ENCODE measurements at regions of chr3 and their contacts with region 1.

Region 1: GRCh38 chr3:44510000-44510368 is 32.5 kb upstream of the ZNF445 start:
- DNase-seq: no peak
- H3K4me3 Mint-ChIP-seq: peak overlapping the region; percentile 89
- H3K27ac Mint-ChIP-seq: peak overlapping the region; percentile 93
- H3K4me1 Mint-ChIP-seq: peaks cover 33% of the 10 kb centered on the region
- H3K27me3 Mint-ChIP-seq: no peaks in the 10 kb centered on the region

Region 2: DNA sequence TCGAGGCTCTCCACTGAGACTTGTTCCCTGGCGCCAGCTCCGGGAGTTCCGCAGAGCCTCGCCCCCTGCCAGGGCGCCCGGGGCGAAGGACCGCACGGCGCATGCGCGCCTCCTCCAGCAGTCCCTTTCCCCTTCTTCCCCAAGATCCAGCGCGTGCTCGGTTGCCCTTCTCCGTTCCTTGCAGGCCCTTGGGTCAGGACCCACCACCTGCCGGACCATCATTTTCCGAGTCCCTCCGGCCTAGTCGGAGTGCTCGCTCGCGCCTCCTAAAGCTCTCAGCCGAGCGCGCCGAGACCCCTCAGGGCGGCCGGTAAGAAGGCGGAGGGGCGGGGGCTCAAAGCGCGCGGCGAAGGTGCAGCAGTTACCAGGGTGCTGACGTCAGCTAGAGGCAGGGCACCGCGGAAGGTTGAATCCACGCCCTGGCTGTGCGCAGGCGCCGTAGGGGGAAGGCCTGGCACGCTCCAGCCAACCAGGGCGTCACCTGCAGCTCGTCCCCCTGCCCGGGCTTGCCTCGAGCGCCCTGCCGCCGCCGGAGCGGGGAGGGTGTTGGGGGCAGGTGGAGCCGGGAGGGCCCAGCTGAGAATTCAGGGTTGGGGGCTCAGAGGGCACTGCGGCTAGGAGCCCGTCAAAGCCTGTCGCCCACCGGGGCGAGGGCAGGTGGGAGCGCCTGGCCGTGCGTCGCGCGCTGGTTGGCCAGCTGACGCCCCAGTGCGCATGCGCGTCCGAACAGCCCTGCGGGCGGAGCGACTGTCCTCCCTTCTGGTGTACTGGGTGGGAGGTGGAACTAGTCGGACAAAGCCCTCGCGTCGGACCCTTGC is 171.8 kb before region 1 on chr3 and contains the start of gene TCAIM:
- CTCF ChIA-PET with region 1: interaction called, 3 read pairs
- POLR2A ChIA-PET with region 1: interaction called, 18 read pairs
- intact Hi-C with region 1: loop called (anchors 1 kb)
- DNase-seq: peak; percentile 99
- H3K4me3 Mint-ChIP-seq: peak within 1 kb of the TSS; percentile 98
- H3K27ac Mint-ChIP-seq: peak within 1 kb of the TSS; percentile 97
- H3K4me1 Mint-ChIP-seq: peaks cover 22% of the 10 kb centered on the region
- H3K27me3 Mint-ChIP-seq: peaks cover 6% of the 10 kb centered on the region
- total RNA-seq, gene TCAIM: 17.2 to 17.9 TPM

Region 3: GRCh38 chr3:44454258-44454657 is 55.7 kb before region 1 on chr3:
- CTCF ChIA-PET with region 1: no interaction called
- POLR2A ChIA-PET with region 1: no interaction called
- intact Hi-C with region 1: no loop called
- DNase-seq: no peak
- H3K4me3 Mint-ChIP-seq: no peak overlapping the region
- H3K27ac Mint-ChIP-seq: peak overlapping the region; percentile 23
- H3K4me1 Mint-ChIP-seq: no peaks in the 10 kb centered on the region
- H3K27me3 Mint-ChIP-seq: no peaks in the 10 kb centered on the region

Region 4: DNA sequence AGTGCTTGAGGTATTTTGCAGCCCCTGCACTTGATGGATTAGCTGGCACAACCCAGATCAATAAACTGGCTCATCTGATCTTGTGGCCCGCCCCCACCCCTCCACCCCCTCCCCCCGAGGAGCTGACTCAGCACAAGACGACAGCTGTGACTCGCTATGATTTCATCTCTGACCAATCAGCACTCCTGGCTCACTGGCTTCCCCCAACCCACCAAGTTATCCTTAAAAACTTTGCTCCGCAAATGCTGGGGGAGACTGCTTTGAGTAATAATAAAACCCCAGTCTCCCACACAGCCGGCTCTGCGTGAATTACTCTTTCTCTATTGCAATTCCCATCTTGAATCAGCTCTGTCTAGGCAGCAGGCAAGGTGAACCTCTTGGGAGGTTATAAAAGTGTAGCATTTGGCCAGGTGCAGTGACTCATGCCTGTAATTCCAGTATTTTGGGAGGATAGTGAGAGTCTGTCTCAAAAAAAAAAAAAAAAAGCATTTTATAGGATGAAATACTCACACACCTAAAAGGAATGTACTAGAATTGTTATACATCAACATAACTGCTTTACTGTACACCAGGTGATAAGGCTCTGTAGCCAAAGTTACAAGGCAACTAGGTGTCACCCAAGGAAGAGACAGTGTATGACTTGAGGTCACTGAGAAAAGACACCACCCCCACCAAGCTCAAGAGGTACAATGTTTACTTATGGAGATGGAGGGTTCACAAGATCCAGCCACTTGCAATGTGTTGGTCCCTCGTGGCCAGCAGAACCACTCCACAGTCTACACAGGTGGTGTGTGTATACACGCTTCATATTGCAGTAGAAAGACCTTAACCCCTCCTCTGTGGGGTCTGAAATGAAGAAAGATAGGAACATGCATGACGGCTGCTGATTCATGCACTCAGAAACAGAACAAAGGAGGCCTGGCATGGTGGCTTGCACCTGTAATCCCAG is 41.1 kb before region 1 on chr3:
- CTCF ChIA-PET with region 1: no interaction called
- POLR2A ChIA-PET with region 1: no interaction called
- intact Hi-C with region 1: loop called (anchors 2 kb)
- DNase-seq: peak; percentile 74
- H3K4me3 Mint-ChIP-seq: no peak overlapping the region
- H3K27ac Mint-ChIP-seq: peak overlapping the region; percentile 64
- H3K4me1 Mint-ChIP-seq: peaks cover 34% of the 10 kb centered on the region
- H3K27me3 Mint-ChIP-seq: no peaks in the 10 kb centered on the region

Region 5: GRCh38 chr3:44529927-44530326 is 19.9 kb after region 1 on chr3:
- CTCF ChIA-PET with region 1: interaction called, 10 read pairs
- POLR2A ChIA-PET with region 1: no interaction called
- intact Hi-C with region 1: no loop called
- DNase-seq: peak; percentile 23
- H3K4me3 Mint-ChIP-seq: no peak overlapping the region
- H3K27ac Mint-ChIP-seq: no peak overlapping the region
- H3K4me1 Mint-ChIP-seq: no peaks in the 10 kb centered on the region
- H3K27me3 Mint-ChIP-seq: peaks cover 13% of the 10 kb centered on the region

Region 6: DNA sequence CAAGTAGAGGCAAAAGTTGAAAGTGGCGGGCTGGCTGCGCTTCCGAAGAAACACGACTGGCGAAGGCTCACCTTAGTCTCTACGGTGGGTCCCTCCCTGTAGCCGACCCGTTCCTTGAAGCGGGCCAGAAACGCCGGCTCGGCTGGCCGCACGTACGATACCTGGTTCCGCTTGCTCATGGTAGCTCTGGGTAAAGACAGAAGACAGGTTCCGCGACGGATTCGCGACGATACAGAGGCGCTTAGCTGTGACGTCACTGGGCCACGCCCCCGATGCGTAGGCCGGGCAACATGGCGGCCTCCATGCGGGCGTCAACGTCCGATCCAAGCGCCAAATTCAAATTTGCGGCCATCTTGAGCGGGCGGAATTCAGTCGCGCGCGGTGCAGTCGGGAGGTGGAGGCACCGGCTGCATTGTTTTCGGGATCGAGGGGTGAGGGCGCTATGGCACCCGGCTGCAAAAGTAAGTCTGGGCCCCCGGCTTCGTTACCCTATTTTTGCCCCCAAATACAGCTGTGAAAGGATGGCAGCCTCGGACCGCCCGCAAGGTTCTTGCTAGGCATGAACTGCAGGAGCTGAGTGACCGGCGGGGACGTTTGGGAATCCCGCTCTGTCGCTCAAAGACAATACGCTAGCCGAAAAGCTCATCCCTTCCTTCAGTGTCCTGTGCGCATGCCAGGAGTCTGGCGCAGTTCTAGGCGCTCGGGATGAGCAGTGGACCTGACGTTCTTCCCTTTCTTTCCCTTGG is 251.6 kb after region 1 on chr3 and contains the starts of genes KIAA1143 and KIF15:
- CTCF ChIA-PET with region 1: no interaction called
- POLR2A ChIA-PET with region 1: interaction called, 6 read pairs
- intact Hi-C with region 1: loop called (anchors 5 kb)
- DNase-seq: peak; percentile 99
- H3K4me3 Mint-ChIP-seq: peak within 1 kb of the TSS; percentile 92
- H3K27ac Mint-ChIP-seq: peak within 1 kb of the TSS; percentile 77
- H3K4me1 Mint-ChIP-seq: peaks cover 32% of the 10 kb centered on the region
- H3K27me3 Mint-ChIP-seq: no peaks in the 10 kb centered on the region
- total RNA-seq, gene KIAA1143: 32.5 to 38.6 TPM
- total RNA-seq, gene KIF15: 41.0 to 45.1 TPM